Common myeloid progenitor, CD34-positive (primary cell): ENCODE measurements at regions of chr3 and their contacts with region 1.

Region 1: DNA sequence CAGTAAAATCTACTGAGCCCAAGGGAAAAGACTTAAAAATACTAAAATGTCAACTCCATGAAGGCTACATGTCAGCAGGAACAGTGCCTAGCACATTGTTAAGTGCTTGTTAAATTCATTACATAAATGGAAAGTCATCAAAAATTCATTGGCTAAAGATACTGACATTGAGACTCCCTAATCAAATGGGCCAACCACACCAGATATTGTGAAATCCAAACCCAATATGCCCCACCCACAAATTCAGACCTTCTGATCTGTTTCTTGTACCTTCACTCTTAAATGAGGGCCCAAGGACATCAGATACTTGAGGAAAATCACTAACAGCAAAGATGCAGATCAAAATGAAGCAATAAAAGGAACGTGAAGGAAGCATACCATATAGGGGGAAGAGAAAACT is 20.7 kb downstream of the MRPS22 start:
- DNase-seq: no peak
- H3K4me3 ChIP-seq: no peak overlapping the region
- H3K27ac ChIP-seq: no peak overlapping the region
- H3K4me1 ChIP-seq: no peaks in the 10 kb centered on the region
- H3K27me3 ChIP-seq: no peaks in the 10 kb centered on the region

Region 2: GRCh38 chr3:139353920-139354556 is 10.5 kb before region 1 on chr3:
- CTCF ChIA-PET with region 1: interaction called, 12 read pairs
- POLR2A ChIA-PET with region 1: no interaction called
- DNase-seq: peak; percentile 25 to 41 (median 40)
- H3K4me3 ChIP-seq: no peak overlapping the region
- H3K27ac ChIP-seq: no peak overlapping the region
- H3K4me1 ChIP-seq: no peaks in the 10 kb centered on the region
- H3K27me3 ChIP-seq: no peaks in the 10 kb centered on the region

Region 3: DNA sequence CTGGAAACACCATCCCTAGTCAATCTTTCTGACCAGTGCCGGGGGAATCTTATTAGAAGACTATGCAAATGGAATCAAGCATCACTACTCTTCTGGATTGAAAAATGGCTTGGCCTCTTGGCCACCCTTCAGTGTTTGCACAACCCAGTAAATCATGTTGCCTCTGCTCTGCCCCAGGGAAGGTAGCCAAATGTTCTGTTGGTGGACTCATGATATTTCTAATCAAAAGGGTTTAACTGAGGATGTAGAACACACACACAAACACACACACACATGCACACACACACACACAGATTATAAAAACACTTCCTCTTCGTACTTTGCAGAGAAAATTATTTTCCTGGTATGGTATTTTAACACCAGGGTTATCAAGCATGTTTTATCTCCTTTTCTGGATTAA is 103.8 kb after region 1 on chr3:
- CTCF ChIA-PET with region 1: no interaction called
- POLR2A ChIA-PET with region 1: no interaction called
- DNase-seq: no peak
- H3K4me3 ChIP-seq: no peak overlapping the region
- H3K27ac ChIP-seq: no peak overlapping the region
- H3K4me1 ChIP-seq: no peaks in the 10 kb centered on the region
- H3K27me3 ChIP-seq: no peaks in the 10 kb centered on the region